CD8-positive, alpha-beta T cell (primary cell): ENCODE measurements at regions of chr2 and their contacts with region 1.

Region 1: GRCh38 chr2:158024288-158024898 is 77.3 kb upstream of the UPP2 start:
- DNase-seq: peak in 8 of 9 experiments; percentile 33 to 66 (median 51)
- ATAC-seq: peak; percentile 59
- H3K4me3 ChIP-seq: no peak overlapping the region
- H3K4me3 Mint-ChIP-seq: no peak overlapping the region
- H3K27ac ChIP-seq: no peak overlapping the region
- H3K27ac Mint-ChIP-seq: no peak overlapping the region
- H3K4me1 ChIP-seq: no peaks in the 10 kb centered on the region
- H3K4me1 Mint-ChIP-seq: peaks cover 3% of the 10 kb centered on the region
- H3K27me3 ChIP-seq: no peaks in the 10 kb centered on the region
- H3K27me3 Mint-ChIP-seq: no peaks in the 10 kb centered on the region
- CTCF ChIP-seq: peak; percentile 79

Region 2: DNA sequence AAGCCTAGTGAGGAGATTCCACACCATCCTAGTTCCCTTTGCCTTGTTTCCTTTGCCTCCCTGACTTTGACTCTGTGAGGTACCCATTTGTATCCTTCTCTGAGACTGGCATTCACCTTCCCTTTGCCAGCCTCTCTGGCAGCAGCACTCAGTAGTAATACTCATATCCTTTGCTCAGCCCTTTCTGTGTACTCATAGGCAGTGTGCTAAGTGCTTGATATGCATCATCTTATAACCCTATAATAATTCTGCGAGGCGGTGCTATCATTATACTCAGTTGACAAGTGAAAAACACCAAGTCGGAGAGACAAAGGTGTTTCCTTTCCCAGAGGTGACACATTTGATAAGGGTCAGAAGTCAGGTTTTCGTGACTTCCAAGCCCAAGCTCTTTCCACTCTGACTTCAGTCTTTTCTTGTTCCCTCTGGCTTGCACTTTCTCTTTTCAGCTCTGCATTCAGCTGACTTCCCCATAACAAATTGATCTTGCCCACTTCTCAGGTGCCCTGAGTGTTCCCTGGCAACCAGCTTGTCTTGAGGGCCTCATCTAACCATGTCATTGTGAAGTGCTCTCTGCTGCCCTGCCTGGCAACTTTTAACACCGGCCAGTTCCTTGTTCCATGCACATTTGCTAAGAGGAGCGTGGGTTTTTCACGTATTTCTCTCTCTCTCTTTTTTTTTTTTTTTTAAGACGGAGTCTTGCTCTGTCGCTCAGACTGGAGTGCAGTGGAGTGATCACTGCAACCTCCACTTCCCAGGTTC is 17.3 kb before region 1 on chr2:
- CTCF ChIA-PET with region 1: interaction called, 12 read pairs
- POLR2A ChIA-PET with region 1: no interaction called
- intact Hi-C with region 1: no loop called
- DNase-seq: peak in 1 of 9 experiments; percentile 24
- ATAC-seq: peak; percentile 40
- H3K4me3 ChIP-seq: no peak overlapping the region
- H3K4me3 Mint-ChIP-seq: no peak overlapping the region
- H3K27ac ChIP-seq: no peak overlapping the region
- H3K27ac Mint-ChIP-seq: no peak overlapping the region
- H3K4me1 ChIP-seq: no peaks in the 10 kb centered on the region
- H3K4me1 Mint-ChIP-seq: peaks cover 4% of the 10 kb centered on the region
- H3K27me3 ChIP-seq: no peaks in the 10 kb centered on the region
- H3K27me3 Mint-ChIP-seq: peaks cover 11% of the 10 kb centered on the region
- CTCF ChIP-seq: no peak

Region 3: DNA sequence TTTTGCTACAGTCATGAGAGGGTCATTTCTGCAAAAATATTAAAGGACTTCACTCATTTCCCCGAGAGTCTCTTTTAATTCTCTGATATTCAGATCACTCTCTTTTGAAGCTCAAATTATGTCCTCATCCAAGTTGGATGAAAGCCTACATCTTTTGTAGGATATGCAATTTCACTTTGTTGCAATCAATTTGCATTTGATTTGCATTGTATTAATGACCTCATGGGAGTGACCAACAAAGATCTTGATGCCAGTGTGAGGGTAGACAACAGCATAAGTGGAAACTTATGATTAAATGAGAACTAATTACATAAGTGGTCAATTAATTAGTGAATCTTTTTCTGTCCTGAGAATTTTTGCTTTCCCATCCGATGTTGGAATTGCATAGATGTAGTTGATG is 17.0 kb after region 1 on chr2:
- CTCF ChIA-PET with region 1: interaction called, 31 read pairs
- POLR2A ChIA-PET with region 1: no interaction called
- intact Hi-C with region 1: no loop called
- DNase-seq: no peak
- ATAC-seq: no peak
- H3K4me3 ChIP-seq: no peak overlapping the region
- H3K4me3 Mint-ChIP-seq: no peak overlapping the region
- H3K27ac ChIP-seq: no peak overlapping the region
- H3K27ac Mint-ChIP-seq: no peak overlapping the region
- H3K4me1 ChIP-seq: no peaks in the 10 kb centered on the region
- H3K4me1 Mint-ChIP-seq: peaks cover 3% of the 10 kb centered on the region
- H3K27me3 ChIP-seq: peaks cover 0 to 3% of the 10 kb centered on the region in 2 experiments
- H3K27me3 Mint-ChIP-seq: peaks cover 13% of the 10 kb centered on the region
- CTCF ChIP-seq: no peak

Region 4: GRCh38 chr2:158745044-158745865 is 720.9 kb after region 1 on chr2:
- CTCF ChIA-PET with region 1: interaction called, 78 read pairs
- POLR2A ChIA-PET with region 1: no interaction called
- intact Hi-C with region 1: loop called in 1 of 2 experiments (anchors 2 kb)
- DNase-seq: peak in 6 of 9 experiments; percentile 18 to 54 (median 39)
- ATAC-seq: peak; percentile 46
- H3K4me3 ChIP-seq: no peak overlapping the region
- H3K4me3 Mint-ChIP-seq: no peak overlapping the region
- H3K27ac ChIP-seq: no peak overlapping the region
- H3K27ac Mint-ChIP-seq: no peak overlapping the region
- H3K4me1 ChIP-seq: no peaks in the 10 kb centered on the region
- H3K4me1 Mint-ChIP-seq: no peaks in the 10 kb centered on the region
- H3K27me3 ChIP-seq: no peaks in the 10 kb centered on the region
- H3K27me3 Mint-ChIP-seq: peaks cover 29% of the 10 kb centered on the region
- CTCF ChIP-seq: no peak

Region 5: DNA sequence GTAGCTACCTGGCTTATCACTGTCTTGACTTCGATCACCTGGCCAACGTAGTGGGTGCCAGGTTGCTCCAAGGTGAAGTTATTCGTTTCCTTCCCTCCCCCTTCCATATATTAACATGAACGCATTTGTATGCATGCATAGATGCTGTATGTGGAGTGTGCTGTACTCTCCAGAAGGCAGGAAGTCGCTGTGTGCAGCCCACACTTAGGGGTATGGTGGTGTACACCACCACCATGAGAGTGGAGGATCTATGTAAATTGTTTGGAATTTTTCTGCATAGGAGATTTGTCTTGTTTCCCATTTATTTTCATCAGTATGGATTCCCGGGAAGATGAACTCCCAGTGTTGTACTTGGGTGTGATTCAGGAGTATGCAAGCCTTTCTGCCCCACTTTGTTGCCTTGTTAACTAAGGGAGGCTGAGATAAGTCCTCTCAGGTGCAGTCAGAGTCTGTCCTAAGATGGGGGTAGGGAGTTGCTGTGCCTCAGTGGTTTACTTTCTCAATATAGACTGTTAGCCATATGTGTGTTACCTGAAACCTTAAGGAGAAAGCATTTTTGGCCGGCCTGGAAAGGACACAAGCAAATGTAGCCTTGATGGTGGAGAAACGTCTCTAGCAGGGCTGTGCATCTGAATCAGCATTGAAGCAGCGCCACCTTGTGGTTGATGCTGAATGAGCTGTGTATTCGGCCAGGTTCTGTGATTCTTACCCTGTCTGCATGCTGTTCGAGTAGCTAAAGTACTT is 1093.9 kb after region 1 on chr2:
- CTCF ChIA-PET with region 1: no interaction called
- POLR2A ChIA-PET with region 1: no interaction called
- intact Hi-C with region 1: loop called in 1 of 2 experiments (anchors 5 kb)
- DNase-seq: peak; percentile 54 to 89 (median 79)
- ATAC-seq: peak; percentile 75
- H3K4me3 ChIP-seq: no peak overlapping the region
- H3K4me3 Mint-ChIP-seq: no peak overlapping the region
- H3K27ac ChIP-seq: no peak overlapping the region
- H3K27ac Mint-ChIP-seq: no peak overlapping the region
- H3K4me1 ChIP-seq: no peaks in the 10 kb centered on the region
- H3K4me1 Mint-ChIP-seq: peaks cover 12% of the 10 kb centered on the region
- H3K27me3 ChIP-seq: no peaks in the 10 kb centered on the region
- H3K27me3 Mint-ChIP-seq: no peaks in the 10 kb centered on the region
- CTCF ChIP-seq: peak; percentile 80